Right ventricle myocardium inferior (tissue), 1 donor: ENCODE measurements at regions of chr7 and their contacts with region 1.

Region 1: DNA sequence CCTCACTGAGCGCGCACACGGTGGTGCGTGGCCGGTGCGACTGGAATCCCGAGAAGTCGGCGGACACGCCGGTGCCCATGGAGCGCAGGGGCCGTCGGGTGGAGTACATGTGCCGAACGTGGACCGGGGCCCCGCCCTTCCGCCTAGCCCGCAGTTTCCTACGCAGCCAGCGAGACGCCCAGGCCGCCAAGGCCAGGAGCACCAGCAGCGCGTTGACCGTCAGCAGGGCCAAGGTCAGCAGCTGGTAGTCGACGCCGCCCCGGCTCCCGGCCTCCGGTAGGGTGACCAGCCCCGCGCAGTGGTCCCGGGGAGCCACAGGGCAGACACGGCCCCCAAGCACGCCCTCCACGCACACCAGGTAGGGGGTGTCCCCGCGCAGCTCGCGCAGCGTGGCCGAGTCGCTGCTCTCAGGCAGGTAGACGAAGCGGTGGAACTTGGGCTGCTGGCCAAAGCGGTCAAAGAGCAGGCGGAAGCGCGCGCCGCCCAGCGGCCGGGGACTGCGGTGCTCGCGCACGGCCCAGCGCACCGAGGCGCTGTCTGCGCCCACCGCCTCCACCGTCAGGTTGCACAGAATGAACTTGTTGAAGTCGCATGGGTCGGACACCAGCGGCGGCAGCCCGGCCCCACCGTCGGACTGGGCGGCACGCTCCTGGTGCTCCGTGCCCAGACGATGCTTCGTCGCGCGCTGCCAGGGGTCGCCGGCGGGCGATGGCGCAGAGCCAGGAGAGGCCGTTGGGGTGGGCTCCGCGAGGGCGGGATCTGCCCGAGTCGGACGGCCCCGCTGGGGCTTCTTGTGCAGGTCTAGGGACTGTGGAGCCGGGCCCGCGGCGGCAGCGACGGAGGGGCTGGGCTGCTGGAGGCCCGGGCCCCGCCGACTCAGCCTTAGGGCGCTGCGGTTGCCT is 2.2 kb downstream of the TRIL start:
- DNase-seq: peak; percentile 90
- ATAC-seq: peak; percentile 69

Region 2: GRCh38 chr7:28840592-28840995 is 115.4 kb before region 1 on chr7:
- intact Hi-C with region 1: no loop called
- DNase-seq: no peak
- ATAC-seq: no peak

Region 3: DNA sequence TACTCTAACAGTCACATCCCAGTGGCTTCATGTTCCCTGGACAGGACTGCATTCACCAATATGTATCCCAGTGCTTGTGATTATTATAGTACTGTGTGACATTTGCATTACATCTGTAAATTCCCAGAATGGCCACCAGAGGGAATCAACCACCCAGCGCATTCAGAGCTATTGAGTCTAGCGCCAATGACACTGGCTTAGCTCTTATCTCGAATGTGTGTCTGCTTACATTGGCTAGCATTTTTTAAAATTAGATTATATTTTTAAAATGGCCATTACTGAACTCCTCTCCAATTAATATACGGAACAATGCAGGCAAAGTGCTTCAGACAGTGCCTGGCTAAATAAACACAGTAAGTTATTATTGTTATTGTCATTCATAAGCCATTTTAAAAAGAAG is 34.1 kb before region 1 on chr7:
- intact Hi-C with region 1: loop called (anchors 2 kb)
- DNase-seq: no peak
- ATAC-seq: peak; percentile 93

Region 4: DNA sequence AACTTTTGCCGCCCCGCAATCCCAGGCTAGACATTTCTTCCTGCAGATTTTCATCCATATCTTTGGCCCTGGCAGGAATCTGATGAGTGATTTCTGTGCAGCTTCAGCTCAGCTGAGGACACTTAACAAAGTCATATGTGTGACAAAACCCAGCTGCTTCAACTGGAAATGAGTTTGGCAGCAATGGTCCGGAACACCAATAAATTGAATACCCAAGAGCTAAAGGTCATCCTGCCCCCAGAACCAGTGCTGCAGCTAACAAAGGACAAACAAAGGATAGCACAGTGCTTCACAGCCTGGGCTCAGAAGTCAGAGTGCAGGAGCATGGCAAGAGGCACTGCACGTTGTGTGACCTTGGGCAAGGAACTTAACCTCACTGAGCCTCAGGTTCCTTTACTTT is 42.1 kb after region 1 on chr7:
- intact Hi-C with region 1: loop called (anchors 5 kb)
- DNase-seq: no peak
- ATAC-seq: peak; percentile 65

Region 5: DNA sequence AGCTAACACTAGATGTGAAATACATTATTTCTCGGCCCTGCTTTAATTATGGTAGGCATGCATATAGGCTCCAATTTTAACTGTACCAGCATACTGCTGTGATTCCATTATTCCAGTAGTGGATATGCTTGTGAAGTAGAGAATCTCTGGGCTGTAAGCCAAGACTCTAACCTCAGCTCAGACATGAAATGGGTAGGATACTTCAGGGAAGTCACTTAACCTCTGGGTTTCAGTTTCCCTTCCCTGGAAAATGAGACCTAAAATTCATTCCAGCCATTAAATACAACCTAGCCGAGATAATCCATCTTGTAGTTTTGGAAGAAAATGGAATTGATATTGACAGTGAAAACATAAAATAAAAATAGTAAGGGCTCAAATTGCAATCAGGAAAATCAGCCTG is 61.7 kb after region 1 on chr7:
- intact Hi-C with region 1: loop called (anchors 5 kb)
- DNase-seq: no peak
- ATAC-seq: peak; percentile 24

Region 6: GRCh38 chr7:29035044-29035740 is 79.2 kb after region 1 on chr7:
- intact Hi-C with region 1: loop called (anchors 5 kb)
- DNase-seq: no peak
- ATAC-seq: no peak

Region 7: GRCh38 chr7:29057046-29057445 is 101.1 kb after region 1 on chr7:
- intact Hi-C with region 1: no loop called
- DNase-seq: no peak
- ATAC-seq: no peak

Region 8: GRCh38 chr7:29105752-29106668 is 150.0 kb after region 1 on chr7:
- intact Hi-C with region 1: loop called (anchors 1 kb)
- DNase-seq: no peak
- ATAC-seq: peak; percentile 80